GM12878 (cell line): ENCODE measurements at regions of chr21 and their contacts with region 1.

Region 1: DNA sequence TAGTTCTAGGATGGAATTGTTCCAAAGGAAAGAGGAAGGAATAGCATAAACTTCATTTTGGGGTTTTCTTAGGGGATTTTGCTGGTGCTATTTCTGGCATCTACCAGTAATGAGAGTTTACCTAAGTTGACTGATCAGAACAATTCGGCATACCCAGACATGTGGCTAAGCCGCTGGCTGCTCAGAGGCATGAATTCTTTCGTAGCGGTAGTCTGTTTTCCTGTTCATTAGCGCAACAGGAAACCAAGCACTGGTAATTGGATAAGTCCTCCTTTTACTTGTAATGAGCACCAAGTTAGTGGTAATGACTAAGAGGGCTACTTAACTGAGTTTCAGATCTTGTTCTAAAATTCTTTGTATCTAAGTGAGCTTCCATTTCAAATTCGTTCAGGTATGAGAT is 38.6 kb downstream of the C21orf91 start:
- DNase-seq: peak; percentile 95
- ATAC-seq: peak; percentile 64
- H3K4me3 ChIP-seq: no peak overlapping the region
- H3K27ac ChIP-seq: peak overlapping the region; percentile 91
- H3K4me1 ChIP-seq: peaks cover 65% of the 10 kb centered on the region
- H3K27me3 ChIP-seq: no peaks in the 10 kb centered on the region
- CTCF ChIP-seq: no peak
- EP300 ChIP-seq: peak; percentile 83 to 87
- POLR2A ChIP-seq: no peak
- RAD21 ChIP-seq: 0 out of 2 replicates have a peak, but pooled peaks have one; percentile 19

Region 2: DNA sequence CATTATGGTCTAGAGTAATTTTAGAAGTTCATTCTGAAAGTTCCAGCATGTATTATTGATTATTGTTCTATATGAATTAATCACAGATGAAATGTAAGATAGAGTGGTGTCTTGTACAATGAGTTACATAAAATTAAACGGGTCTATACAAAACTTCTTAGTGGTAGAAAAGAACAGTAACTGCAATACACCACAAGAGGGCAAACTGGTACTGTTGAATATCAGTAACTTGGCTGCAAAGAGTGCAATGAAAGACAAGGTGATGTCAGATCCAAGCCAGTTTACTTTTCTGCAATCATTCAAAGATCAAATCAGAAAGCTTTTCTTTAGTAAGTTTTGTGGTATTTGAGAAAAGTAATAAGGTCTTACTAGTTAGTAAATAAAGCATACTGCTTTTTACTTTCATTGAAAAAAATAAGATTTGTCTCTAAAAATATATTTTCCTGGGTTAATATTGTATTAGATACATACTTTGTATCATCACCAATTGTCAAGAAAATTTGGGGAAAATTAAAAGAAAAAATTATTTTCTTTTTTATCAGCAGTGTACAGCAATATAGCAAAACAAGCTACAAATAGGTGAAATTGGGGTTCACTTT is 101.4 kb before region 1 on chr21:
- CTCF ChIA-PET with region 1: interaction called, 15 read pairs
- POLR2A ChIA-PET with region 1: no interaction called
- RAD21 ChIA-PET with region 1: interaction called, 10 read pairs
- SMC1A ChIA-PET with region 1: interaction called, 12 read pairs
- in situ Hi-C with region 1: no loop called
- intact Hi-C with region 1: loop called (anchors 5 kb)
- DNase-seq: peak; percentile 48
- ATAC-seq: peak; percentile 95
- H3K4me3 ChIP-seq: no peak overlapping the region
- H3K27ac ChIP-seq: no peak overlapping the region
- H3K4me1 ChIP-seq: no peaks in the 10 kb centered on the region
- H3K27me3 ChIP-seq: no peaks in the 10 kb centered on the region
- CTCF ChIP-seq: peak; percentile 70 to 89 (median 76); a peak in 5 of 6 replicates
- EP300 ChIP-seq: no peak
- POLR2A ChIP-seq: no peak
- RAD21 ChIP-seq: peak; percentile 97

Region 3: DNA sequence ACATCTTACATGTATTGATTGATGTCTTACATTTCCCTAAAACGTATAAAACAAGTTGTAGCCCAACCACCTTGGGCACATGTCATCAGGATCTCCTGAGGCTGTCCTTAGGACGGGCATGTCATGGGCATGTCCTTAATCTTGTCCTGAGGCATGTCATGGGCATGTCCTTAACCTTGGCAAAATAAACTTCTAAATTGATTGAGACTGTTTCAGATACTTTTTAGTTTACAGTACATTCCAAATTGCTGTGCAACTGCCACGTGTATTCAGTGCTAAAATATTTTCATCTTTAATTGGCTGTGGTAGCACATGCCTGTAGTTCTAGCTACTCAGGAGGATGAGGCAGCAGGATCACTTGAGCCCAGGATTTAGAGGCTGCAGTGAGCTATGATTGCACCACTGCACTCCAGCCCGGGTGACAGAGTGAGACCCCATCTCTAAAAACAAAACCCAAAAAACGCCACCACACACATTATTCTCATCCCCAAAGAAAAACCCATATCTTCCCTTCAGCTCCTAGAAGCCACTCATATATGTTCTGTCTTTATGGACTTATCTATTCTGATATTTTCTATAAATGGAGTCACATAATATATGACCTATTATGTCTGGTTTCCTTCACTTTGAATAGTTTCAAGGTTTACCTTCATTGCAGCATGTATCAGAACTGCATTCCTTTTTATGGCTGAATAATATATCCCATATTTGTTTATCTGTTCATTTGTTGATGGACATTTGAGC is 71.8 kb before region 1 on chr21:
- CTCF ChIA-PET with region 1: no interaction called
- POLR2A ChIA-PET with region 1: no interaction called
- RAD21 ChIA-PET with region 1: interaction called, 3 read pairs
- SMC1A ChIA-PET with region 1: interaction called, 4 read pairs
- in situ Hi-C with region 1: no loop called
- intact Hi-C with region 1: loop called (anchors 2 kb)
- DNase-seq: no peak
- ATAC-seq: peak; percentile 63
- H3K4me3 ChIP-seq: no peak overlapping the region
- H3K27ac ChIP-seq: no peak overlapping the region
- H3K4me1 ChIP-seq: peaks cover 10% of the 10 kb centered on the region
- H3K27me3 ChIP-seq: no peaks in the 10 kb centered on the region
- CTCF ChIP-seq: no peak
- EP300 ChIP-seq: no peak
- POLR2A ChIP-seq: no peak
- RAD21 ChIP-seq: no peak

Region 4: GRCh38 chr21:17793246-17794123 is 12.9 kb after region 1 on chr21:
- CTCF ChIA-PET with region 1: interaction called, 9 read pairs
- POLR2A ChIA-PET with region 1: interaction called, 8 read pairs
- RAD21 ChIA-PET with region 1: interaction called, 58 read pairs
- SMC1A ChIA-PET with region 1: interaction called, 45 read pairs
- in situ Hi-C with region 1: no loop called
- intact Hi-C with region 1: no loop called
- DNase-seq: no peak
- ATAC-seq: peak; percentile 68
- H3K4me3 ChIP-seq: peak overlapping the region; percentile 4; the same call in 1 of the 2 replicates
- H3K27ac ChIP-seq: peak overlapping the region; percentile 45
- H3K4me1 ChIP-seq: peaks cover 33% of the 10 kb centered on the region
- H3K27me3 ChIP-seq: no peaks in the 10 kb centered on the region
- CTCF ChIP-seq: no peak
- EP300 ChIP-seq: no peak
- POLR2A ChIP-seq: no peak
- RAD21 ChIP-seq: no peak

Region 5: DNA sequence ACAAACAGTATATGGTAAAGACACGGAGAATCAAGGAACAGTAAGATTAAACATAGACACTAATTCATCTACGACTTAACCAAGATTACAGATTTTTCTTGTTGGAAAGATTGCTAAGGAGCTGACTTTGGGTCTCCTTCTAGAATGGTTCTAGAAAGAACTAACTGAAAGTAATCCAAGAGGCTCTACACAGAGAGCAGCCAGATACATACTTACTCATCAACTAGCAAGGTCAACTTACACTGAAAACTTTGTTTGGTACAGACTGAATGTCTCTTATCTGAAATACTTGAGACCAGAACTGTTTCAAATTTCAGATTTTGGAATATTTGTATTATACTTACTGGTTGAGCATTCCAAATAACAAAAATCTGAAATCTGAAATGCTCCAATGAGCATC is 32.8 kb after region 1 on chr21:
- CTCF ChIA-PET with region 1: interaction called, 48 read pairs
- POLR2A ChIA-PET with region 1: interaction called, 13 read pairs
- RAD21 ChIA-PET with region 1: interaction called, 72 read pairs
- SMC1A ChIA-PET with region 1: interaction called, 100 read pairs
- in situ Hi-C with region 1: no loop called
- intact Hi-C with region 1: no loop called
- DNase-seq: no peak
- ATAC-seq: no peak
- H3K4me3 ChIP-seq: 0 out of 2 replicates have a peak overlapping the region, but pooled peaks have one; percentile 2
- H3K27ac ChIP-seq: no peak overlapping the region
- H3K4me1 ChIP-seq: peaks cover 7% of the 10 kb centered on the region; the same call in 1 of the 2 replicates
- H3K27me3 ChIP-seq: no peaks in the 10 kb centered on the region
- CTCF ChIP-seq: no peak
- EP300 ChIP-seq: no peak
- POLR2A ChIP-seq: no peak
- RAD21 ChIP-seq: no peak

Region 6: GRCh38 chr21:17848228-17848627 is 67.7 kb after region 1 on chr21:
- CTCF ChIA-PET with region 1: interaction called, 4 read pairs
- POLR2A ChIA-PET with region 1: interaction called, 7 read pairs
- RAD21 ChIA-PET with region 1: interaction called, 7 read pairs
- SMC1A ChIA-PET with region 1: interaction called, 40 read pairs
- in situ Hi-C with region 1: no loop called
- intact Hi-C with region 1: loop called (anchors 2 kb)
- DNase-seq: peak; percentile 84
- ATAC-seq: peak; percentile 98
- H3K4me3 ChIP-seq: no peak overlapping the region
- H3K27ac ChIP-seq: peak overlapping the region; percentile 29; the same call in 1 of the 2 replicates
- H3K4me1 ChIP-seq: peaks cover 17% of the 10 kb centered on the region; the same call in 1 of the 2 replicates
- H3K27me3 ChIP-seq: no peaks in the 10 kb centered on the region
- CTCF ChIP-seq: no peak
- EP300 ChIP-seq: peak; percentile 74 to 95; a peak in 2 of 4 replicates
- POLR2A ChIP-seq: no peak
- RAD21 ChIP-seq: peak; percentile 13; the same call in 1 of the 2 replicates

Region 7: GRCh38 chr21:17925000-17925610 is 144.6 kb after region 1 on chr21:
- CTCF ChIA-PET with region 1: interaction called, 10 read pairs
- POLR2A ChIA-PET with region 1: no interaction called
- RAD21 ChIA-PET with region 1: interaction called, 3 read pairs
- SMC1A ChIA-PET with region 1: interaction called, 13 read pairs
- in situ Hi-C with region 1: no loop called
- intact Hi-C with region 1: no loop called
- DNase-seq: peak; percentile 33
- ATAC-seq: peak; percentile 100
- H3K4me3 ChIP-seq: no peak overlapping the region
- H3K27ac ChIP-seq: no peak overlapping the region
- H3K4me1 ChIP-seq: no peaks in the 10 kb centered on the region
- H3K27me3 ChIP-seq: no peaks in the 10 kb centered on the region
- CTCF ChIP-seq: peak; percentile 82 to 91 (median 87)
- EP300 ChIP-seq: no peak
- POLR2A ChIP-seq: no peak
- RAD21 ChIP-seq: peak; percentile 76

Region 8: DNA sequence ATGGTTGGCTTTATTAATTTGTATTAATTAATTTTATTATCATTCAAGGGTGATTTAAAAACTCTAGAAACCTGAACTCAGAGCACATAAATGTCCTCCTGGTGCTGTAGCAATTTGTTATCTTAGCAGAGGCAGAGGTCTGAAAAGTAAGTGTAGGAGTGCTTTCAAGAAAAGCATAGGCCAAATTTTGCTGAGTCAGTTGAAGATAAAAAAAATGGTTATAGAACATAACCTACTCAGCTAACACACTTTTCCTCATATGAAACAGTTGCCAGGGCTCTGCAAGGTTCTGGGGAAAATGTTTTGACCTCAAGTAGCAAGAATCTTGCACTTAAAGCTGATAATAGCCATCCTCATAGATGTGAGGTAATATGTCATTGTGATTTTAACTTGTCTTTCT is 410.6 kb after region 1 on chr21:
- CTCF ChIA-PET with region 1: no interaction called
- POLR2A ChIA-PET with region 1: no interaction called
- RAD21 ChIA-PET with region 1: no interaction called
- SMC1A ChIA-PET with region 1: no interaction called
- in situ Hi-C with region 1: no loop called
- intact Hi-C with region 1: no loop called
- DNase-seq: no peak
- ATAC-seq: no peak
- H3K4me3 ChIP-seq: no peak overlapping the region
- H3K27ac ChIP-seq: no peak overlapping the region
- H3K4me1 ChIP-seq: no peaks in the 10 kb centered on the region
- H3K27me3 ChIP-seq: no peaks in the 10 kb centered on the region
- CTCF ChIP-seq: no peak
- EP300 ChIP-seq: no peak
- POLR2A ChIP-seq: no peak
- RAD21 ChIP-seq: no peak

Region 9: GRCh38 chr21:18298228-18298627 is 517.7 kb after region 1 on chr21:
- CTCF ChIA-PET with region 1: no interaction called
- POLR2A ChIA-PET with region 1: no interaction called
- RAD21 ChIA-PET with region 1: no interaction called
- SMC1A ChIA-PET with region 1: no interaction called
- in situ Hi-C with region 1: no loop called
- intact Hi-C with region 1: no loop called
- DNase-seq: no peak
- ATAC-seq: no peak
- H3K4me3 ChIP-seq: no peak overlapping the region
- H3K27ac ChIP-seq: no peak overlapping the region
- H3K4me1 ChIP-seq: no peaks in the 10 kb centered on the region
- H3K27me3 ChIP-seq: no peaks in the 10 kb centered on the region
- CTCF ChIP-seq: no peak
- EP300 ChIP-seq: no peak
- POLR2A ChIP-seq: no peak
- RAD21 ChIP-seq: no peak